Mucosa of descending colon (tissue), 3 donors: ENCODE measurements at regions of chr7 and their contacts with region 1.

Region 1: DNA sequence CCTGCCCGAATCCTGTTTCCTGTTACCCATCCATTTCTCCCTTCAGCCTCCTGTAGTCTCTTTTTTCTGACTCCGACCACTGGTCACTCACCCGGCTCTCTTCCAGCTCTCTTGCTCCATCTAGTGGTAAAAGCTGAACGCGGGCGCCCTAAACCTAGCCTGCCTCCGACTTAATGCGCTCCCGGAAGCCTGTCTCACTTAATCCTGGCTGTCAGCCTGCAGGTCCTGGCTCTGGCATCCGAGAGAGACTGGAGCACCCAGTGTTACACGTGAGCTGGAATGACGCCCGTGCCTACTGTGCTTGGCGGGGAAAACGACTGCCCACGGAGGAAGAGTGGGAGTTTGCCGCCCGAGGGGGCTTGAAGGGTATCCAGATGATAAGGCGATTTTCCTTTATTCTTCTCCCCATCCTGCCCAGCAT is 10.3 kb downstream of the SUMF2 start:
- DNase-seq: peak; percentile 79 to 90 (median 89)
- ATAC-seq: peak; percentile 99
- H3K4me3 ChIP-seq: no peak overlapping the region
- H3K4me1 ChIP-seq: no peaks in the 10 kb centered on the region
- CTCF ChIP-seq: peak; percentile 89

Region 2: DNA sequence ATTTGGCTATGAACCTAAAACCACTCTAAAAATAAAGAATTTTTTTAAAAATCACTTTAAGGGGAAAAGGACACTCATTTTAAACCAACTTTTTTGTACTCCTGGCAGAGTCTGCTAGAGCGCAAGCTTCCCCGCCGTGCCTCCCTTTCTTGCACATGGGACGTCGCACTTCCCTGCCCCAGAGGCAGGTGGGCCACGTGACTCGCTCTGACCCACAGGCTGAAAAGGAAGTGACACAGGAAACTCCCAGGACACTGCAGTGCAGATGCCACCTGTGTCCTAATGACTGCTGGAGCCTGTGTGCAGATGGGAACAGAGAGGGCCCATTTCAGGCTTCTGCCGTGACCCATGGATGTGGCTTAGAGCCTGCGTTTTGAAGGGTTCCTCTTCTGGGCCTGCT is 851.4 kb before region 1 on chr7:
- intact Hi-C with region 1: no loop called
- DNase-seq: no peak
- ATAC-seq: no peak
- H3K4me3 ChIP-seq: no peak overlapping the region
- H3K4me1 ChIP-seq: no peaks in the 10 kb centered on the region
- CTCF ChIP-seq: no peak

Region 3: GRCh38 chr7:56003749-56004148 is 70.6 kb before region 1 on chr7:
- intact Hi-C with region 1: loop called (anchors 2 to 10 kb)
- DNase-seq: no peak
- ATAC-seq: no peak
- H3K4me3 ChIP-seq: no peak overlapping the region
- H3K4me1 ChIP-seq: no peaks in the 10 kb centered on the region
- CTCF ChIP-seq: no peak

Region 4: DNA sequence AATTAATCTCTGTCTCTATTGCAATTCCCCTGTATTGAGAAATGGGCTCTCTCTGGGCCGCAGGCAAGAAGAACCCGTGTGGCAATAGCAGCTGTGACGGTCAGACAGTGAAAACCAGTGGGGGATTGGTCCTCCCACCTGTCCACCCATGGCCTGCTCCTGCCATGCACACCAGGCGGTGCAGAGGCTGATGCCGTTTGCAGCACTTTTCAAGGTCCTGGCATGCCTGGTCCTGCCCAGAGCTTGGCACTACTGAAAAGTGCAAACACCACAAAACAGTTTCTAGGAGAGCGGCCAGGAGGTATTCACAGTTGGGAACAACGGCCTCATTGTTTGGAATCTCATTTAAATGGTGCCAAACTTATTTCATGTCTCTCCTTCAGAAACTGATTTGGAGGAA is 64.7 kb before region 1 on chr7:
- intact Hi-C with region 1: loop called (anchors 2 to 10 kb)
- DNase-seq: peak in 2 of 3 donors; percentile 35 to 54
- ATAC-seq: peak; percentile 86
- H3K4me3 ChIP-seq: no peak overlapping the region
- H3K4me1 ChIP-seq: no peaks in the 10 kb centered on the region
- CTCF ChIP-seq: no peak